ENCODE measurements at regions of chr11 and their contacts with region 1.

Region 1: GRCh38 chr11:73376160-73376802 is at the start of gene RELT:
- DNase-seq: peak; percentile 93 to 97 (median 95)
- ATAC-seq: peak; percentile 94
- H3K4me3 ChIP-seq: peak within 1 kb of the TSS; percentile 95
- H3K27ac ChIP-seq: peak within 1 kb of the TSS; percentile 86
- H3K4me1 ChIP-seq: peaks cover 23 to 60% of the 10 kb centered on the region in 2 experiments
- H3K27me3 ChIP-seq: peaks cover 0 to 5% of the 10 kb centered on the region in 2 experiments; a peak in 1 of 5 replicates
- CTCF ChIP-seq: peak; percentile 90 to 95 (median 91)
- EP300 ChIP-seq: no peak; the same call in 1 of the 2 replicates
- POLR2A ChIP-seq: peak; percentile 80
- RAD21 ChIP-seq: peak; percentile 48 to 55
- polyA plus RNA-seq, gene RELT: 1.1 to 1.2 TPM

Region 2: GRCh38 chr11:73307323-73308002 is 68.8 kb before region 1 on chr11:
- CTCF ChIA-PET with region 1: no interaction called
- POLR2A ChIA-PET with region 1: interaction called, 3 read pairs
- in situ Hi-C with region 1: no loop called
- intact Hi-C with region 1: loop called (anchors 5 kb)
- DNase-seq: peak; percentile 92 to 94 (median 94)
- ATAC-seq: peak; percentile 93
- H3K4me3 ChIP-seq: peak overlapping the region; percentile 49
- H3K27ac ChIP-seq: peak overlapping the region; percentile 32; the same call in 1 of the 3 replicates
- H3K4me1 ChIP-seq: peaks cover 0 to 22% of the 10 kb centered on the region in 2 experiments; a peak in 4 of 5 replicates
- H3K27me3 ChIP-seq: peaks cover 6 to 43% of the 10 kb centered on the region in 2 experiments; a peak in 3 of 5 replicates
- CTCF ChIP-seq: peak; percentile 89 to 92 (median 91)
- EP300 ChIP-seq: peak; percentile 29; the same call in 1 of the 2 replicates
- POLR2A ChIP-seq: no peak
- RAD21 ChIP-seq: peak; percentile 83 to 91

Region 3: DNA sequence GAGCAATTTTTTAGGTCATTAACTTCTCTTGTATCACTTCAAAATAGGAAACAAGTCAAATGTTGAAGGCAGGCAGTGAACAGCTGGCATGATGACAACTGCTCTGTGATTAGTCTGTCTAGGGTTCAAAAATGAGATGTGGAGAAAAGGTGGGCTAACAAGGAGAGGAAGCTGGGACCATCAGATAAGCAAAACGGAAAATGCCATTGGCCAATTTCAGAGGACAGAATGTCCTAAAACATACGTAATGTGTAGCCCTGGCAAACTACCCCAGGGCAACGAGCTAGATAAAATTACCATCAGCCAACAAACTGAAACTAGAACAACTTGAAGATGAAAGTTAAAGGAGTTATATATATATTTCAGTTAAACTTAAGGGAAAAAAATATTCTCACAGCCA is 93.1 kb after region 1 on chr11:
- CTCF ChIA-PET with region 1: no interaction called
- POLR2A ChIA-PET with region 1: no interaction called
- in situ Hi-C with region 1: no loop called
- intact Hi-C with region 1: no loop called
- DNase-seq: peak in 1 of 4 experiments; percentile 10
- ATAC-seq: no peak
- H3K4me3 ChIP-seq: no peak overlapping the region
- H3K27ac ChIP-seq: no peak overlapping the region
- H3K4me1 ChIP-seq: peaks cover 0 to 8% of the 10 kb centered on the region in 2 experiments; a peak in 3 of 5 replicates
- H3K27me3 ChIP-seq: no peaks in the 10 kb centered on the region; a peak in 2 of 5 replicates
- CTCF ChIP-seq: no peak
- EP300 ChIP-seq: no peak
- POLR2A ChIP-seq: no peak
- RAD21 ChIP-seq: no peak

Measured in K562 (cell line).